Motor neuron (in vitro differentiated cells): ENCODE measurements at regions of chr3 and their contacts with region 1.

Region 1: GRCh38 chr3:112293368-112294321 is at the start of gene SLC9C1:
- ATAC-seq: peak; percentile 57 to 90 (median 84)
- H3K4me3 ChIP-seq: no peak within 1 kb of the TSS
- H3K27ac ChIP-seq: no peak within 1 kb of the TSS
- H3K4me1 ChIP-seq: peaks cover 0 to 6% of the 10 kb centered on the region in 2 donors
- total RNA-seq, gene SLC9C1: 0.05 to 0.27 TPM in 2 of 8 experiments, not detected in the others

Region 2: DNA sequence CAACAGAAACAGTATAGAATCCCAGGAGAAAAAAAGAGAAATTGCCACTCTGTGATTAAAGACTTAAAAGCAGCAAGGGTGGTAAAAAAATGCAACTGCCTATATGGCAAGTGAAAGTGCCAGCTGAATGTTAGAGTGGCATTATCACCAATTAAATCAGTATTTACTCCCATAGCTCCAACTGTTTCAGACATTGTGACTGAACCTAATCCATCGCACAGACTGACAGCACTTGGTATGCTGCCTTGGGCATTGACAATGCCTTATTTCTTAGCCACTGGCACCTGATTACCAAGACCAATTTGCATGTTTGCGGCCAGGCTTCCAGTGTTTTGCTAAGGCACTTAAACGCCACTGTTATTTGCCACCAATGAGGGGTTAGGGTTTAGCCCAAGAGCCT is 1423.9 kb before region 1 on chr3:
- in situ Hi-C with region 1: no loop called
- ATAC-seq: no peak
- H3K4me3 ChIP-seq: no peak overlapping the region
- H3K27ac ChIP-seq: no peak overlapping the region
- H3K4me1 ChIP-seq: no peaks in the 10 kb centered on the region

Region 3: DNA sequence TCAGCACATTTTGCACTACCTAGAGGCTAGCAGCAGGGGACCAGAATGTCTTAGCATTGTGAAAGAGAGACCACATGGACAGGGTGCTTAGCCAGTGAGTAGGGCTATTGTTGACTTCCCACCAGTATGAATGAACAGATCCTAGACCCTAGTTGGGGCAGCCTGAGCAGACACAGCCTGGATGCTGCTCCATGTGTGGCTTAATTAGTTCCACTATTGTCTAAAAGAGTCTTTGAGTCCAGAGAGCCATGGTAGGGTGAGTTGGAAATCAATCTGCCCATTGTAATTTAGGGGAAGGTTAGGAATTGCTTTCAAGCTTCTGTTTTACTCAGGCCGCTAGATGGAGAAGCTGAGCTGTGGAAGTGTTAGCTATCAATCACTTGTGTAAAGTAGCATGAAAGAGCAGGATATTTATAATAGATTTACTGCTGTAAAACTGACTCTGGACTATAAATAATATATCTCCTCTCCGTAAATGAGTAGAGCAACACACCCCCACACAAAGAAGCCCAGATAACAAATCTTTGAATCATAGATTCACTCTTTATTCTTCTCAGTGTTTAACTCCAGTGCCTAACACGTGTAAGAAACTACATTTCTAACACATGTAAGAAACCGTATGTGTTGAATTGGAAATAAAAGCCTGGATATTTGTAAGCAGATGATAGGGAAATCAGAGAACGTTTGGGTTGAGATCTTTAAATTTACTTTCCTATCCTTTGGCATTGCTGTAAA is 156.5 kb before region 1 on chr3:
- in situ Hi-C with region 1: loop called in 1 of 9 experiments (anchors 10 kb)
- ATAC-seq: peak; percentile 60 to 91 (median 81)
- H3K4me3 ChIP-seq: no peak overlapping the region
- H3K27ac ChIP-seq: no peak overlapping the region
- H3K4me1 ChIP-seq: peaks cover 0 to 17% of the 10 kb centered on the region in 2 donors

Region 4: GRCh38 chr3:112531358-112531781 is 237.7 kb after region 1 on chr3:
- in situ Hi-C with region 1: loop called in 1 of 9 experiments (anchors 25 kb)
- ATAC-seq: no peak
- H3K4me3 ChIP-seq: no peak overlapping the region
- H3K27ac ChIP-seq: no peak overlapping the region
- H3K4me1 ChIP-seq: no peaks in the 10 kb centered on the region